Right ventricle myocardium superior (tissue), 1 donor: ENCODE measurements at regions of chr4 and their contacts with region 1.

Region 1: DNA sequence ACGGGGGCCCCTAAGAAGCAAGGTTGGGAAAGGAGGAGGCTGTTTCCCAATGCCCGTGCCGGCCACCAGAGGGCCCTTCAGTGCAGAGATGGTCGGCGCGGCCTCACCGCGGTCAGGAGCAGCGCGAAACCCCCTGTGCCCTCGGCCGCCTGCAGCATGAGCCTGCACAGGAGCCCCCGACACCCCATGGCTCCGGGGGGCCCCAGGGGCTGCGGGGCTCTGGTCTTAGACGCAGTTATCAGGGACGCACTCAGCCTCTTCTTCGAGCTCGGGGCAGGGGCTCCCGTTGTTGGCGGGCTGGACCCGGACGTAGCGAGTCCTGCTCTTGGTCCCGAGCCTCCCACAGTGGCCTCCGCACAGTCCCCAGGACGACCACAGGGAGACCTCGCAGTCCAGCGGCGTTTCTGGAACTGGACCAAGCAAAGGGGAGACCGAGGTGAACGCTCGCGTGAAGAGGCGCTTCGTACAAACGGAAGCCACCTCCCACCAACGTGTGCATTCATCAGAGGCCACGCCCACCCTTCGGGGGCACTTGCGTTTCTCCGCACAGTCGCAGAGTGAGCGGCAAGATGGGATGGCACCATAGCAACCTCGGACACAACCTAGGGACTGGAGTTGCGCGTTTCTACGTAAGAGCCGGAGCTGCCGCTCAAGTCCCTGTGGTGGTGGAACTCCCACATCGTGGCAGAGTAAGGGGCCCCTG is 5.0 kb downstream of the SPON2 start:
- DNase-seq: peak; percentile 90
- ATAC-seq: peak; percentile 90

Region 2: DNA sequence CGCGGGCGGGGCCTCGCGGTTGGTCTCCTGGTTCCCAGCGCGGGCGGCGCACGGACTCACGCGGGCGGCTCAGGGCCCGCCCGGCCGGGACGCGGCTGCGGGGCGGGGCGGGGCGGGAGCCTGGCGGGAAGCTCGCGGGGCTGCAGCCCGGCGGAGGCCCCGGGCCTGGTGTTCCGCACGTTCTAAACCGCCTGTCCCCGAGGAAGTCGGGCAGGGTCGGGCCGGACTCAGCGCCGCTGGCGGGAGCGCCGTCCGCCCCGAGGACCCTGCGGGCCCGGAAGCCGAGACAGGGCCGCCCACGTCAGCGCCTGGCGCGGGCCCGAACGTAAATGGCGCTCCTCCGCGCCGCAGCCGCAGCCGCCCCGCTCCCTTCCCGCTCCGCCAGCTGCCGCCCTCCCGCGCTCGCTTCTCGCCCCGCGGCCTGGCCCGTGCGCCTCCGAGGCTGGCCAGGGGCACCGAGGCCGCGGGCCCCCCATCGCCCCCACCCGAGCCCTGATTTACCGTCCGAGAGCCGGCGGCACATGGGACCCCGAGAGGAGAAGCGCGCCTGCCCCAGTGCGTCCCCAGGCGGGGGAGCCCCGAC is 81.8 kb after region 1 on chr4:
- intact Hi-C with region 1: loop called (anchors 5 kb)
- DNase-seq: peak; percentile 93
- ATAC-seq: peak; percentile 71

Region 3: DNA sequence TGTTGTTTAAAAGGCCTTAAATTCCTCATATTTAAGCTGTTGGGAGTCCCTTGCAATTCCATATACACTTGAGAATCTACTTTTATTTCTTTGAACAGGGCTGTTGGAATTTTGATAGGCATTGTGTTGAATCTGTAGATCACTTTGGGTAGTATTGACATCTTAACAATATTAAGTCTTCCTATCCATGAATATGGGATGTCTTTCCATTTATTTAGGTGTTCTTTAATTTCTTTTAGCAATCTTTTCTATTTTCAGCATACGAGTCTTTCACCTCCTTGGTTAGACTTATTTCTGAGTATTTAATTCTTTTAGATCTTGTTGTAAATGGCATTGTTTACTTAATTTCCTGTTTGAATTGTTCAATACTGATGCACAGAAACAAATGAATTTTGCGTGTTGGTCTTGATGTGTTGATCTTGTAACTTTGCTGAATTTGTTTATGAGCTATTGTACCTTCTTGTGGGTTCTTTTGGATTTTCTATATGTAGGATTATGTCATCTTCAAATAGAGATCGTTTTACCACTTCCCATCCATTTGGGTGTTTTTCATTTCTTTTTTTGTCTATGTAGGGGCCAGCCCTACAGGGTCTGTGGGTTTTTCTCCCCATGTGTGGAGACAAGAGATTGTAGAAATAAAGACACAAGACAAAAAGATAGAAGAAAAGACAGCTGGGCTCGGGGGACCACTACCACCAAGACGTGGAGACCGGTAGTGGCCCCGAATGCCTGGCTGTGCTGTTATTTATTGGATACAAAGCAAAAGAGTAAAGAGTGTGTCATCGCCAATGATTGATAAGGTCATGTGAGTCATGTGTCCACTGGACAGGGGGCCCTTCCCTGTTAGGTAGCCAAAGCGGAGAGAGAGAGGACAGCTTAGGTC is 99.7 kb after region 1 on chr4:
- intact Hi-C with region 1: loop called (anchors 5 kb)
- DNase-seq: no peak
- ATAC-seq: no peak